Kidney (tissue), 22 donors: ENCODE measurements at regions of chr16 and their contacts with region 1.

Region 1: DNA sequence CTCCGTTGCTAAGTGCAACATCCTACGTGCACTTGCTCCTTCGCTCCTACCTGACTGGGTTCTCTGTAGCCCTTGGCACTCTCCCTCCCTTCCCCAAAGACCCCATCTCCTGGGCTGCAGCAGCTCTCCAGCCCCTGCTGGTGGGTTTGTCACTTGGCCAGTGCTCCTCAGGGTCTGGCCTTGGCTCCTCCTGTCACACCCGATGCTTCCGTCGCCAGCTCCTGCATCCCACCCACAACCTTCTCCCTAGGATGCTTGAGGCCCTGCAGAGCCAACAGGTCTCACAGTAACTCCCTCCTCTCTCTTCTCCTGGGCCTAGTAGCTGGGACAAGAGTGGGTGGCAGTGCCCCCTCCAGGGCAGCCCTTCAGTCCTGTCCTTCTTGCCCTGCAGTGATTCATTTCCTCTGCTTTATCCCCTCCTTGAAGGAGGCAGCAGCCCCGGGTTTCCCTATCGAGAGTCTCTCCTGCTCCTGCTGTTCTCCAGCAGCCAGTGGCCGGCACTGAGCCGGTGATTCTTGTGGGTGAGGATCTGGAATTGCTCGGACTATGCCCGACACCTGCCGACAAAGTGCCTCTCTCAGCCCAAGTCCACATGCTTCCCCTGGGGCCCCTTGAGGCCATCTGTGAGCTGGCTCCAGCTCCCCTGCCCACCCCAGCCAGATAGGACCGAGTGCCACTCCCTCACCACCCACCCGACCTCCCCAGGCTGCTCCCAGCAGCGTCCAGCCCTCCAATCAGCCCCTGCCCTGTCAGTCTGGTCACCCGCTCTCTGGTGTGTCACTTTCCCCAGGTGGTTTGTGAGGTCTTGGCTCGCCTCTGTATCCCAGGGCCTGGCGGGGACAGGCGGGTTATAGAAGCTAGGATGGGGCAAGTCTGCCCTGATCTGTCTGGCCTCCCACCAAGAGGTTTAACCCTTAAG is 3.8 kb downstream of the LITAFD start:
- DNase-seq: peak; percentile 36 to 73 (median 53)
- H3K4me3 ChIP-seq: no peak overlapping the region
- H3K27ac ChIP-seq: no peak overlapping the region
- H3K4me1 ChIP-seq: peaks cover 0 to 4% (median 0%) of the 10 kb centered on the region in 3 donors
- H3K27me3 ChIP-seq: no peaks in the 10 kb centered on the region
- CTCF ChIP-seq: no peak

Region 2: GRCh38 chr16:8655184-8655717 is 230.7 kb before region 1 on chr16:
- intact Hi-C with region 1: loop called (anchors 5 kb)
- DNase-seq: peak in 1 of 5 donors; percentile 26
- H3K4me3 ChIP-seq: no peak overlapping the region
- H3K27ac ChIP-seq: no peak overlapping the region
- H3K4me1 ChIP-seq: no peaks in the 10 kb centered on the region
- H3K27me3 ChIP-seq: no peaks in the 10 kb centered on the region
- CTCF ChIP-seq: peak; percentile 44

Region 3: DNA sequence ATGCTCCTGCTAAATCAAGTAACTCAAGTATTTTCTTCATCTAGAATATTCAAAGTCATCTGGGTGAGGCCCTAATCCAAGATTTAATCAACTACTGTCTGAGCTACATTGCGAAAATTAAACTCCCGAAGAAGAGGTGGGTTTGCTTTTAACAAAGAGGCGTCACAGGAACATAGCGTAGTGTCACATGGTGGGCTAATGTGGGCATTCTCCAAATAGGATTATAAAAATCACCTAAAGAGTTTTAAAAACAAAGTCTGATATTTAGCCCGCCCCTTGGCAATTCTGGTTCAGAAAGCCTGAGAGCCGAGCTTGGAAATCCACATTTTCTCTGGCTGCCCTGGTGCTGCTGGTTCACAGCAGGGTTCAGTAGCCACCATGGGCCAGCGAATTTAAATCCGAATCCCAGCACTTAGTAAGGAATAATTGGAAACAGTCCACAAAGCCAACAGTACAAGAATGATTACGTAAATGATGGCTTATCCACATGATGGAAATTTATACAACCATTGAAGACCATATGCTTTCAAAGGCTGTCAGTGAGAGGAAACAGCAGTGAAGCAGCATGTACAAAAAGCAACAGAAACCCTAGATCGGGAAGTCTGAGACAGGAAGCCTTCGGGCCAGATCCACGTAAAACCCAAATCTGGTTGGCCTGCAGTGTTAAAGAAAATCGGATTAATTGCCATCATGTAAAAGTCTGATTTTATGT is 79.5 kb before region 1 on chr16:
- intact Hi-C with region 1: loop called (anchors 10 kb)
- DNase-seq: no peak
- H3K4me3 ChIP-seq: no peak overlapping the region
- H3K27ac ChIP-seq: no peak overlapping the region
- H3K4me1 ChIP-seq: peaks cover 0 to under 1% (median 0%) of the 10 kb centered on the region in 3 donors
- H3K27me3 ChIP-seq: no peaks in the 10 kb centered on the region
- CTCF ChIP-seq: no peak

Region 4: DNA sequence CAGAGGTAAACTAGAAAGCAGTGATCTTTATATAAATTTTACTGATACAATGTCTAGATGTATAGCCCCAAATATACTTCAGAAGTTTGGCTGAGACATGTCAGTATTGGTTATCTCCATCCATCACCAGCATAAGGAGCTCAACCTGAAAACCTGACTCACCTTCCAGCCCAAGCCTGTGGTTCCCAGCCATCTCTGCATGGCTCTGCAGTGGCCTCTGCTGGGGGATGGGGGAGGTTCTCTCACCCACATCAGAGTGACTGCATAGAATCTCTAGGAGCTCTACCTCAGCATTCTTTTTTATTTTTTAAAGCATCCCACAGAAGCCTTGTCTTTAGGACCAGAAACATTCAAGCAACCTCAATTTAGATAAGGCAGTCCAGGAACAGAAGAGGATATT is 50.5 kb after region 1 on chr16:
- intact Hi-C with region 1: no loop called
- DNase-seq: peak in 3 of 5 donors; percentile 29 to 55 (median 39)
- H3K4me3 ChIP-seq: no peak overlapping the region
- H3K27ac ChIP-seq: no peak overlapping the region
- H3K4me1 ChIP-seq: peaks cover 0 to 9% (median 7%) of the 10 kb centered on the region in 3 donors
- H3K27me3 ChIP-seq: no peaks in the 10 kb centered on the region
- CTCF ChIP-seq: peak; percentile 27